PC-3 (cell line): ENCODE measurements at regions of chr7 and their contacts with region 1.

Region 1: DNA sequence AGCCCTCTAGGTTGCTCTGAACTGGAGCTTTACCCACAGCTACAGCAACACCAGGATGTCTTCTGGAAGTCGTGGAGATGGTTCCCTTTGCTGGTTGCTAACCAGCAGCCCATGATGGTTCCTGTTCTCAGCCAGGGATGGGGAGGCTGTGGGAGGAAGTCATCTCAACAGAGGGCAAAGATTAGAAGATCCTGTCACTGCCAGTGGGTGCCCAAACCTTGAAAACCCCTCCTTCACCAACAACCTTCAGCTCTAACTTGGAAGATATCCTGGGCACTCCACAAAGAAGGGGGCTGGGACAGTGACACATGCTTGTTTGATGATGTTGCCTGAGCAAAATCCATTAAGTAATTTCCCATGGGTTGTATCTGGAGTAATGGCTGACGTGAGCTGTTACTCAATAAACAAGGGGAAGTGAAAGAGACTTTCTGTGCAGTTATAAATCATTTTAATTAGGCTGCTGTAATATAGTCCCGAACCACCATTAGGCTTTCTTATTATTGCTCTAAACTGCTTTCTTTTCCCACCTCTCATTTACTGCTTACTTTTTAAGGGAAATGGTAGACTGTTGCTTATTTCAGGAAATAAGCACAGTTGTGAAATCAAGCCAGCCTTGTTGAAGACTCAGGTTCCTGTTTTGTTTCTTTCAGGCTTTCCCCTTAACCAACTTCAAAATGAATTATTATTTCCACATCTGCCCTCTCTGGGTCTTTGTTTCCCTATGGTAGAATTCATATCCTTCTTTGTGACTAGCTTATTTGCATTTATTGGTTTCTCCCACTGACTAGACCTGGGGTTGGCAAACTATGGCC is 124.8 kb downstream of the PPP1R17 start:
- DNase-seq: peak; percentile 21
- ATAC-seq: no peak
- H3K4me3 ChIP-seq: no peak overlapping the region
- H3K27ac ChIP-seq: peak overlapping the region; percentile 34
- H3K4me1 ChIP-seq: peaks cover 49% of the 10 kb centered on the region
- H3K27me3 ChIP-seq: no peaks in the 10 kb centered on the region
- CTCF ChIP-seq: no peak

Region 2: GRCh38 chr7:31327071-31327470 is 484.8 kb before region 1 on chr7:
- CTCF ChIA-PET with region 1: no interaction called
- POLR2A ChIA-PET with region 1: no interaction called
- intact Hi-C with region 1: no loop called
- DNase-seq: peak; percentile 55
- ATAC-seq: no peak
- H3K4me3 ChIP-seq: no peak overlapping the region
- H3K27ac ChIP-seq: no peak overlapping the region
- H3K4me1 ChIP-seq: no peaks in the 10 kb centered on the region
- H3K27me3 ChIP-seq: peaks cover 53% of the 10 kb centered on the region
- CTCF ChIP-seq: no peak

Region 3: GRCh38 chr7:31563522-31563921 is 248.3 kb before region 1 on chr7:
- CTCF ChIA-PET with region 1: no interaction called
- POLR2A ChIA-PET with region 1: no interaction called
- intact Hi-C with region 1: no loop called
- DNase-seq: no peak
- ATAC-seq: no peak
- H3K4me3 ChIP-seq: no peak overlapping the region
- H3K27ac ChIP-seq: no peak overlapping the region
- H3K4me1 ChIP-seq: no peaks in the 10 kb centered on the region
- H3K27me3 ChIP-seq: peaks cover 85% of the 10 kb centered on the region
- CTCF ChIP-seq: no peak

Region 4: DNA sequence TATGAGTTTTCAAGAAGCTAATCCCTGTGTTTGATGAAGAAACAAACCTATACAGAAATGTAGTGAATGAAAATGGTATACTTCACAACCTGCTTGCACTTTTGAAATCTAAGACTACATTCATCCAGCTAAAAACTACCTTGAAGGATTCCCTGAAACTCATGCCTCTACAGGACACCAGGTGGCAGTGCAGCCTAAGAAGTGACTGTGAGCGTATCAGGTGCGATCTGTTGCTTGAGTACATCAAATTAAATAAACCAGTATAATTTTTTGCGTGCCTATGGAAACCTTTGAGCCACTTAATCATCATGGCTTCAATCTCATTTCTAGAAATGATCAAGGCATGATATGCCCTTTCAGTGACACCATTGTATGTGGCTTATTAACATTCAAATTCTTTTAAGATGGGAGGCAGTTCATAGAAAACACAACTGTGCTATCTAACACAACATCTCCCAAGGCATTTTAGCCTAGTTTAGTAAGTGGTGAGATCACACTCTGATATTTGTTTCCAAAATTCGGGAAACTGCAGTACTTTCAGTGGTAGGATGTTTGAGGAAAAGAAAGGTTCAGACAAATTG is 67.5 kb before region 1 on chr7:
- CTCF ChIA-PET with region 1: interaction called, 4 read pairs
- POLR2A ChIA-PET with region 1: no interaction called
- intact Hi-C with region 1: loop called (anchors 2 kb)
- DNase-seq: peak; percentile 85
- ATAC-seq: peak; percentile 73
- H3K4me3 ChIP-seq: no peak overlapping the region
- H3K27ac ChIP-seq: no peak overlapping the region
- H3K4me1 ChIP-seq: peaks cover 25% of the 10 kb centered on the region
- H3K27me3 ChIP-seq: no peaks in the 10 kb centered on the region
- CTCF ChIP-seq: peak; percentile 94

Region 5: GRCh38 chr7:31758755-31759154 is 53.1 kb before region 1 on chr7:
- CTCF ChIA-PET with region 1: no interaction called
- POLR2A ChIA-PET with region 1: no interaction called
- intact Hi-C with region 1: no loop called
- DNase-seq: no peak
- ATAC-seq: no peak
- H3K4me3 ChIP-seq: no peak overlapping the region
- H3K27ac ChIP-seq: no peak overlapping the region
- H3K4me1 ChIP-seq: no peaks in the 10 kb centered on the region
- H3K27me3 ChIP-seq: no peaks in the 10 kb centered on the region
- CTCF ChIP-seq: no peak

Region 6: GRCh38 chr7:31883761-31884164 is 71.9 kb after region 1 on chr7:
- CTCF ChIA-PET with region 1: no interaction called
- POLR2A ChIA-PET with region 1: no interaction called
- intact Hi-C with region 1: loop called (anchors 5 kb)
- DNase-seq: peak; percentile 77
- ATAC-seq: peak; percentile 81
- H3K4me3 ChIP-seq: no peak overlapping the region
- H3K27ac ChIP-seq: peak overlapping the region; percentile 56
- H3K4me1 ChIP-seq: peaks cover 13% of the 10 kb centered on the region; the same call in 1 of the 2 replicates
- H3K27me3 ChIP-seq: no peaks in the 10 kb centered on the region
- CTCF ChIP-seq: no peak

Region 7: GRCh38 chr7:31910191-31910590 is 98.3 kb after region 1 on chr7:
- CTCF ChIA-PET with region 1: no interaction called
- POLR2A ChIA-PET with region 1: no interaction called
- intact Hi-C with region 1: no loop called
- DNase-seq: no peak
- ATAC-seq: no peak
- H3K4me3 ChIP-seq: no peak overlapping the region
- H3K27ac ChIP-seq: no peak overlapping the region
- H3K4me1 ChIP-seq: no peaks in the 10 kb centered on the region
- H3K27me3 ChIP-seq: no peaks in the 10 kb centered on the region
- CTCF ChIP-seq: no peak

Region 8: GRCh38 chr7:31938653-31939052 is 126.8 kb after region 1 on chr7:
- CTCF ChIA-PET with region 1: interaction called, 7 read pairs
- POLR2A ChIA-PET with region 1: interaction called, 12 read pairs
- intact Hi-C with region 1: loop called (anchors 5 kb)
- DNase-seq: peak; percentile 85
- ATAC-seq: peak; percentile 71
- H3K4me3 ChIP-seq: no peak overlapping the region
- H3K27ac ChIP-seq: peak overlapping the region; percentile 63
- H3K4me1 ChIP-seq: peaks cover 63% of the 10 kb centered on the region
- H3K27me3 ChIP-seq: no peaks in the 10 kb centered on the region
- CTCF ChIP-seq: peak; percentile 49

Region 9: DNA sequence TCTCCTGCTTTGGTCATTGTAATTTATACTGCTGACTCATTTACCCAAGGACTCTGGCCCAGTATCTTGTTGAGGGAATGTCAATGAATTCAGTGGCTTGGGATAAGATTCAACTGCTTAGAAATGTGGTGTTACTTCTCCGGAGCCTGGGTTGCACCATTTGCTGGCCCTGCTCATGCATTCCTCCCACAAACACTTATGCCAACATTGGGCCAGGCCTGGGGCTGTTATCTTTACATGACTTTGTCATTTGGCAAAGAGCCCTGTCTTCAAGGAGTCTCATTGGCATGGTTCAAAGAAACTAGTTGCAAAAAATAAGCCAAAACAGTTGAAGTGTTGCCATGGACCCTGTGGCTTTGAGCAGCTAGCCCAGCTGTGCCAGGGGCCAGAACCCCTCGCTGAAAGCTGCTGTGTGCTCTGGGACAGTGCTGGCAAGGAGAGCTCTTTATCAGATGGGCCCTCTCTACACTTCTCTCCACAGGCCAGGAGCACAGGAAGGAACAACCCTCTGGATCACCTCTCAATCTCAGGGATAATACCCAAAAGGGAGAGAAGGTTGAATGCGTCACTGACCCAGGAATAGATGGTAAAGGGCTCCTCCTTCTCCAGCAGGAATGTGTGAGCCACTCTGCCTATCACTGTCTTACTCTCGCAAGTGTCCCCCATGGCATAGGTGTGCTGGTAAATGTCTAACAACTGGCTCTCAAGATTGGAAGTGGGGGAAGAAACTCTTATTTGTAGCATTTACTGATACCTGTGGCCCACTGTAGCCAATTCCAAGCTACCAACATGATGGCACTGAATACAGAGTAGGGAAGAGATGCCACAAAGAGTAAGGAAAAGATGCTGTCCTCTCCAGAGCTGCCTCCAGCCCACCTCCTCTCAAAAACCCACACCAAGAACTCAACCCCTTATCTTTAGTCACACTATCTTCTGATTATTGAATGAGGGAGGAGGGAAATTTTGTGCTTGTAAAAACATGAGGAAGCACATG is 281.9 kb after region 1 on chr7:
- CTCF ChIA-PET with region 1: no interaction called
- POLR2A ChIA-PET with region 1: no interaction called
- intact Hi-C with region 1: loop called (anchors 5 kb)
- DNase-seq: peak; percentile 96
- ATAC-seq: peak; percentile 81
- H3K4me3 ChIP-seq: no peak overlapping the region
- H3K27ac ChIP-seq: peak overlapping the region; percentile 84
- H3K4me1 ChIP-seq: peaks cover 40% of the 10 kb centered on the region
- H3K27me3 ChIP-seq: no peaks in the 10 kb centered on the region
- CTCF ChIP-seq: no peak